Endothelial cell of umbilical vein (primary cell): ENCODE measurements at regions of chr21 and their contacts with region 1.

Region 1: DNA sequence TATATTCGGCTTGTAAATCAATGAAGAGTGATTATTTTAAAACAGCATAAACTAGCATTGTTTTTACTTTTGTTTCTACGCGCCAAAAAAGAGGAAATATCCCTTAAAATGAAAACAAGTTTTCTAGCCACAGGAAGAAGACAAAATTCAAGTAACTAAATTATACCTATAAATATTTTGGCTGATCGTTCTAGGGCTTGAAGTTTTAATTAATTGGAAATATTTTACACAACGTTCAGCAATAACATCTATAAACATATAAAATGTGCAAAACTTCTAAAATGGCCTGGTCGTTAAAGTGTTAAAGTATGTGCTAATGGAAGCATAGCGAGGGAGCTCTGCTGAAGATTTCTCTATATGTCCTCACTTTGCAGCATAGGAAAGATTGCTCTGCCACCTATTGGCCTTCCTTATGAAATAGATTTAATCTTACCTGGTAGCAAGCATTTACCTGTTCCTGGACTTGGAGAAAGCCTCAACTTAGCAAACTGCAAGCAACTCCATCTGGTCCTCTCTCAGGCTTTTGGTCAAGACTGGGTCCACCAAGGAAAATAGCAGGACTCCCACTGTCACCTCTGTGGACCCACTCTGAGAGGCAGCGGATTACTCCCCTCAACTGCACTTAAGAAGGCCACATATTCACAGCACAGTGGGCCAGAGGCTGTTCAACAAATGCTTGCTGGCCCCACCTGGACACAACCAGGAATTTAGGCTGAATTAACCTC is 351.3 kb upstream of the RUNX1 start:
- DNase-seq: peak; percentile 73
- H3K4me3 ChIP-seq: no peak overlapping the region
- H3K27ac ChIP-seq: no peak overlapping the region
- H3K4me1 ChIP-seq: peaks cover 7% of the 10 kb centered on the region
- H3K27me3 ChIP-seq: peaks cover 0 to 2% of the 10 kb centered on the region in 2 experiments
- CTCF ChIP-seq: peak; percentile 24 to 29
- POLR2A ChIP-seq: no peak

Region 2: DNA sequence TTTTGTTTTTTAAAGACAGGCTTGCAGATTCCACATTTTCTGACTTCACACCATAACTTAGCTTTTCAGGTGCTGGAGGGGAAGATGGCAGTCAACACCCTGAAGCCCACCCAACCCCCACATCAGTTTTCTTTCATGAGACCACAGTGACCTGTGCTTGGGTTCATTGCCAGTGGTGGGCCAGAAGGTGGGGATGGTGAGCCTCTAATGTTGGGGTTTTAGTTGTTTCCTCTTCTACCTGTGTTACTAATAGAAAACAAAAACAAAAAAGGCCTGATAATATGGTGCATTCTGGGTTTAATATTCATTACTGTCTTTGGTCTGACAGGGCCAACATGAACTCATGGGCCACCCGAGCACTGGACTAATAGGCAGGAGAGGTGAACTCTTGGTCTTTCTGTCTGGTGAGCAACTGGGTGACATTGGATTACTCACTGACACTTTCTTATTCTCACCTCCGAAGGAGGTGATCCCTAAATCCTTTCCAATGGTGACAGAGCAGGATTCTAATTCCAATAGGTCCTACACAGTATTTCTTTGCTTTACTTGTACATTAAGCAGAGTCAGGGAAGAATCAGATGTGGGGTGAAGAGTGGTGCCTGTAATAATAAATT is 598.8 kb before region 1 on chr21:
- CTCF ChIA-PET with region 1: no interaction called
- POLR2A ChIA-PET with region 1: no interaction called
- dilution Hi-C with region 1: no loop called
- intact Hi-C with region 1: loop called (anchors 2 kb)
- DNase-seq: peak; percentile 37
- H3K4me3 ChIP-seq: no peak overlapping the region
- H3K27ac ChIP-seq: no peak overlapping the region
- H3K4me1 ChIP-seq: no peaks in the 10 kb centered on the region
- H3K27me3 ChIP-seq: no peaks in the 10 kb centered on the region
- CTCF ChIP-seq: peak in 1 of 2 donors; percentile 36
- POLR2A ChIP-seq: no peak

Region 3: DNA sequence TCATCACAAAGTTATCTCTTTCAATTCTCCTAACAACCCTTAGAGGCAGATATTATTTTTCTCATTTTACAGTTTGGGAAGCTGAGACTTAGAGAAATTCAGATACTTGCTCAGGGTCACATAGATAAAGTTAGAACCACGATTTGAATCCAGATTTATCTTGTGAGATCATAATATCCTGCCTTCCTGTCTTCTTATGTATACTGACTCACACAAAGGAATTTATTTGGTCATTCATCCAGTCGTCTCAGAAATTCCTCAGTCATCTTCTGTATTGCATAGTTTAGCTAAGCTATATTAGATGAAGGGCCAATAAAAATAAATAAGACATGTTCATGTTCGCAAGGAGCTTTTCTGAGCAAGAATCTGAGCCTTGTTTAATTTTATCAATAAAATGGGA is 315.5 kb before region 1 on chr21:
- CTCF ChIA-PET with region 1: interaction called, 7 read pairs
- POLR2A ChIA-PET with region 1: no interaction called
- dilution Hi-C with region 1: no loop called
- intact Hi-C with region 1: loop called (anchors 1 kb)
- DNase-seq: peak; percentile 73
- H3K4me3 ChIP-seq: no peak overlapping the region
- H3K27ac ChIP-seq: peak overlapping the region; percentile 77
- H3K4me1 ChIP-seq: peaks cover 25% of the 10 kb centered on the region
- H3K27me3 ChIP-seq: no peaks in the 10 kb centered on the region
- CTCF ChIP-seq: no peak
- POLR2A ChIP-seq: no peak

Region 4: DNA sequence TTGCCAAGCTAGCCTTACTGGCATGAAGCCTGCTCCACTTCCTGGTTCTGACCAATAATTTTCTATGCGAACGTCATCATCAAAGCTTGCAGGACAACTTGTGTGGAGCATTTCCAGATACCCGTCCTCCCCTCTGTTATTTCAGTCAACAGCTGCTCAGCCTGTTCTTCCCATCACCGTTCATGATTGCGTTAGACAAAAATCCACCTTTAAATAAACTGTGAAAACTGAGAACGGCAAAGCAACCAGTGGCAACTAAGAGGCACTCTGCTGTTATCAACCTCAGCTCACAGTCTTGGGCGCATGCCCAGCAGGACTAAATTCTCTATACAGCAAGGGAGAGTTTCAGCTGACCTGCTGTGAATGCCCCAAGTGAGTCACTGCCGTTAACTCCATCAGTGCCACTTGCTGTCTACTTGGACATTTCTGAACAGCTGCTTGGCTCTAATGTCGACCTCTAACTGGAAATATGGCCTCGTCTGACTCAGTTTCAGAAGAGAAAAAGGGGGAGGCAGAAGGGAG is 143.9 kb before region 1 on chr21:
- CTCF ChIA-PET with region 1: interaction called, 9 read pairs
- POLR2A ChIA-PET with region 1: no interaction called
- dilution Hi-C with region 1: no loop called
- intact Hi-C with region 1: loop called (anchors 2 kb)
- DNase-seq: peak; percentile 98
- H3K4me3 ChIP-seq: peak overlapping the region in 2 of 3 experiments; percentile 20 to 47
- H3K27ac ChIP-seq: peak overlapping the region; percentile 78
- H3K4me1 ChIP-seq: peaks cover 15% of the 10 kb centered on the region
- H3K27me3 ChIP-seq: no peaks in the 10 kb centered on the region
- CTCF ChIP-seq: no peak
- POLR2A ChIP-seq: no peak

Region 5: GRCh38 chr21:35390013-35390776 is 10.2 kb before region 1 on chr21:
- CTCF ChIA-PET with region 1: interaction called, 13 read pairs
- POLR2A ChIA-PET with region 1: no interaction called
- dilution Hi-C with region 1: no loop called
- intact Hi-C with region 1: no loop called
- DNase-seq: peak; percentile 60
- H3K4me3 ChIP-seq: no peak overlapping the region
- H3K27ac ChIP-seq: no peak overlapping the region
- H3K4me1 ChIP-seq: peaks cover 8% of the 10 kb centered on the region
- H3K27me3 ChIP-seq: no peaks in the 10 kb centered on the region
- CTCF ChIP-seq: no peak
- POLR2A ChIP-seq: no peak

Region 6: GRCh38 chr21:35465741-35466140 is 65.3 kb after region 1 on chr21:
- CTCF ChIA-PET with region 1: no interaction called
- POLR2A ChIA-PET with region 1: no interaction called
- dilution Hi-C with region 1: no loop called
- intact Hi-C with region 1: no loop called
- DNase-seq: no peak
- H3K4me3 ChIP-seq: no peak overlapping the region
- H3K27ac ChIP-seq: no peak overlapping the region
- H3K4me1 ChIP-seq: no peaks in the 10 kb centered on the region
- H3K27me3 ChIP-seq: no peaks in the 10 kb centered on the region
- CTCF ChIP-seq: no peak
- POLR2A ChIP-seq: no peak

Region 7: GRCh38 chr21:35508139-35508888 is 107.9 kb after region 1 on chr21:
- CTCF ChIA-PET with region 1: no interaction called
- POLR2A ChIA-PET with region 1: no interaction called
- dilution Hi-C with region 1: no loop called
- intact Hi-C with region 1: no loop called
- DNase-seq: no peak
- H3K4me3 ChIP-seq: no peak overlapping the region
- H3K27ac ChIP-seq: no peak overlapping the region
- H3K4me1 ChIP-seq: peaks cover 2% of the 10 kb centered on the region
- H3K27me3 ChIP-seq: peaks cover 6 to 14% of the 10 kb centered on the region in 2 experiments
- CTCF ChIP-seq: no peak
- POLR2A ChIP-seq: no peak

Region 8: GRCh38 chr21:35940074-35940927 is 539.9 kb after region 1 on chr21:
- CTCF ChIA-PET with region 1: interaction called, 4 read pairs
- POLR2A ChIA-PET with region 1: no interaction called
- dilution Hi-C with region 1: no loop called
- intact Hi-C with region 1: loop called (anchors 2 kb)
- DNase-seq: peak; percentile 76
- H3K4me3 ChIP-seq: no peak overlapping the region
- H3K27ac ChIP-seq: no peak overlapping the region
- H3K4me1 ChIP-seq: no peaks in the 10 kb centered on the region
- H3K27me3 ChIP-seq: no peaks in the 10 kb centered on the region
- CTCF ChIP-seq: peak; percentile 57 to 64
- POLR2A ChIP-seq: no peak